ENCODE measurements at regions of chr2 and their contacts with region 1.

Region 1: DNA sequence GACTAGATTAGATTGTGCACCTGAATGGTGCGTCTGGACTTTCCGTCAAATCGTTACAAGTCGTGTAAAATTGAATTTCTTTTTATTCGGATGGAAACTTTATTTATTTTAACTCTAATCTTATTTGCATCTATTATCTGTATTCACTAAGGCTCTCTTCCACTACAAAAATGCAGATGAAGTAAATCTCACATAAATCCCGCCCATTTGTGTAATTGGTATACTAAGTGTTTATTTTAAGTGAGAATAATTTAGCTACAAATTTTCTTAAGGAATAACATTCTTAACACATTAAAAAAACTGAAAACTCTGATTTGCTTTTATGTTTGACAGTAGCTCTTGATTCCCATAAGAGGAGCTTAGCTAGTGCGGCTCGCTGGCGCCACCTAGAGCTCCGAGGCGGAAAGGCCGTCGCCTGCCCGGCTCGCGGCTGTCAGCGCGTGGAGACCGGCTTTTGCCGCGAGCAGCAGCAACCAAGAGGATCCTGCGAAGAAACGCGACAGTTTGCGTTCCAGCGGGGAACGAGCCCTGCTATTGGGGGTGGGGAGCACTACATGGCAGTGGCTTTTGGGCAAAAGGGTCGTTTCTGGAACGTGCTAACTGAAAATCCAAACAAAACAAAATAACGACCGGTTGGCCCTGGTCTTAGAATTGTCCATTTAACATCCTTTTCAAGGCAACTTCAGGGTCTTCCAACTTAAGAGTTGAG is 6.7 kb downstream of the SP9 start:
- DNase-seq: peak; percentile 78 to 90
- H3K4me3 ChIP-seq: no peak overlapping the region
- H3K4me1 ChIP-seq: peaks cover 17% of the 10 kb centered on the region
- H3K27me3 ChIP-seq: peaks cover 2% of the 10 kb centered on the region; the same call in 1 of the 2 replicates

Region 2: DNA sequence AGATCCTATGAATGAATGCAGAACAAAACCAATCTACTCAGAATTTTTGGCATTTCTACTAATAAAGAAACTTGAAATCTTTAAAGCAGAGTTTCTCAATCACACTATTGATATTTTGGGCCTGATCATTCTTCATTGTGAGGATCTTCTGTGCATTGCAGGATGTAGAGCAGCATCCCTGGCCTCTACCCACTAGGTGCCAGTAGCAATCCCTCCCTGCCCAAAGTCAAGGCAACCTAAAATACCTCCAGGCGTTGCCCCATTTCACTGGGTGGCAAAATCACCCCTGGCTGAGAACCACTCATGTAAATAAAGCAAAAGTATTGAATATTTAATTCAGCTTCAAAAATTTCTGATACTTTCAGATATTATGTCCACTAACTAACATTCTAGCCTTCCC is 589.3 kb before region 1 on chr2:
- in situ Hi-C with region 1: loop called (anchors 10 kb)
- DNase-seq: peak in 1 of 2 experiments; percentile 28
- H3K4me3 ChIP-seq: no peak overlapping the region
- H3K4me1 ChIP-seq: peaks cover 17% of the 10 kb centered on the region
- H3K27me3 ChIP-seq: no peaks in the 10 kb centered on the region

Region 3: GRCh38 chr2:174158003-174158402 is 183.4 kb before region 1 on chr2:
- in situ Hi-C with region 1: loop called (anchors 5 kb)
- DNase-seq: peak; percentile 31 to 69
- H3K4me3 ChIP-seq: no peak overlapping the region
- H3K4me1 ChIP-seq: peaks cover 11% of the 10 kb centered on the region
- H3K27me3 ChIP-seq: no peaks in the 10 kb centered on the region

Measured in HAP-1 (cell line).